ENCODE measurements at regions of chr20 and their contacts with region 1.

Region 1: GRCh38 chr20:9609887-9610502 is 95.6 kb downstream of the LAMP5 start:
- DNase-seq: peak in 3 of 5 donors; percentile 23 to 58 (median 33)
- H3K4me3 ChIP-seq: no peak overlapping the region
- H3K27ac ChIP-seq: no peak overlapping the region
- H3K4me1 ChIP-seq: no peaks in the 10 kb centered on the region
- H3K27me3 ChIP-seq: no peaks in the 10 kb centered on the region
- CTCF ChIP-seq: peak in 1 of 3 donors; percentile 58
- EP300 ChIP-seq: no peak
- POLR2A ChIP-seq: no peak

Region 2: DNA sequence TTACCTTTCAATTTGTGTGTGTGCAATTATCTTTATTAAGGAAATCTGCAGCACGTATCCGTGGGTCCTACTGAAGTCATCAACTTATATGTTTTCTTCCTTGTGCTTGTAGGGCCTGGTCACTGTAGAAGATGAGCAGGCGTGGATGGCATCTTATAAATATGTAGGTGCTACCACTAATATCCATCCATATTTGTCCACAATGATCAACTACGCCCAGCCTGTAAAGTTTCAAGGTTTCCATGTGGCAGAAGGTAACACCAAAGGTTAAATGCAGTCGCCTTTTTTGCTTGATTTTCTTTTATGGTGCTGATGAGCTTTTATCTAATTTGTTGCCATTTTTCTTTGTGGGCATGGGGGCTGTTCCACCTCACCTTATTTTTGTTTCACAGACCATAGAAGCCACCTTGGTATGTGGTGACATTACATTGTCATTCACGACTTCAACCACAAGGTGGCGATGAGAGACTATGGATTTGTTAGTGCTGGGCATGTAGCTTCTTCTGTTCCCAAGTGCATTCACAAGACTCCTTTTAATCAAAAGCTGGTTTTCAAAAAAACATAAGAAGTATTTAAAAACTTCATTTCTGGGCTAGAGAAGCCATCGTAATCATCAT is 202.1 kb before region 1 on chr20:
- intact Hi-C with region 1: loop called (anchors 5 to 10 kb)
- DNase-seq: peak in 4 of 5 donors; percentile 18 to 62 (median 34)
- H3K4me3 ChIP-seq: no peak overlapping the region
- H3K27ac ChIP-seq: no peak overlapping the region
- H3K4me1 ChIP-seq: no peaks in the 10 kb centered on the region
- H3K27me3 ChIP-seq: no peaks in the 10 kb centered on the region
- CTCF ChIP-seq: peak; percentile 37 to 82 (median 49)
- EP300 ChIP-seq: no peak
- POLR2A ChIP-seq: no peak

Region 3: DNA sequence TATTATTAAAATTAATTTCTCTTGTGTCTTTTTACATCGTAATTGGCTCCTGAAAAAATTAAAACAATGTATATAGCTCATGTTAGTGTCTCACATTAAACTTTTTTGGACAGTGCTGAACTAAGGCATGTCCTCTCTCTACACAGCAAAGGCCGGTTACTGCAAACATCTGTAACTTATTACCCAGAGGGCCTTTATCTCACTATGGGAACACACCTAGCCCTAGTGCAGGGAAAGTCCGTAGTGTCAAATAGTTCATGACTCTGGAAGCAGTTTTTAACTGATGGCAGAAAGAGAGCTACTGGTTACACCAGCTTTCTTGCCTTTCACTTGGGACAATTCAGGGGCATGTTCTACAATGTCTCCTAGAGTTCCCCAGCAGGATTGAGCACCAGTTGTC is 146.7 kb after region 1 on chr20:
- intact Hi-C with region 1: no loop called
- DNase-seq: no peak
- H3K4me3 ChIP-seq: no peak overlapping the region
- H3K27ac ChIP-seq: no peak overlapping the region
- H3K4me1 ChIP-seq: no peaks in the 10 kb centered on the region
- H3K27me3 ChIP-seq: no peaks in the 10 kb centered on the region
- CTCF ChIP-seq: no peak
- EP300 ChIP-seq: no peak
- POLR2A ChIP-seq: no peak

Measured in ovary (tissue), 10 donors.